CD4-positive, alpha-beta T cell (primary cell): ENCODE measurements at regions of chr16 and their contacts with region 1.

Region 1: GRCh38 chr16:4475880-4476788 is at the start of gene HMOX2:
- DNase-seq: peak; percentile 86 to 97 (median 92)
- ATAC-seq: peak; percentile 85
- H3K4me3 ChIP-seq: peak within 1 kb of the TSS; percentile 98
- H3K4me3 Mint-ChIP-seq: peak within 1 kb of the TSS; percentile 92
- H3K27ac ChIP-seq: peak within 1 kb of the TSS; percentile 67 to 80
- H3K27ac Mint-ChIP-seq: peak within 1 kb of the TSS; percentile 78
- H3K4me1 ChIP-seq: peaks cover 68% of the 10 kb centered on the region
- H3K4me1 Mint-ChIP-seq: peaks cover 47% of the 10 kb centered on the region
- H3K27me3 ChIP-seq: no peaks in the 10 kb centered on the region
- H3K27me3 Mint-ChIP-seq: no peaks in the 10 kb centered on the region
- CTCF ChIP-seq: peak; percentile 40
- total RNA-seq, gene HMOX2: 63.4 to 66.4 TPM

Region 2: GRCh38 chr16:3938848-3939624 is 537.1 kb before region 1 on chr16:
- CTCF ChIA-PET with region 1: no interaction called
- POLR2A ChIA-PET with region 1: no interaction called
- intact Hi-C with region 1: no loop called
- DNase-seq: peak; percentile 42 to 82 (median 61)
- ATAC-seq: peak; percentile 84
- H3K4me3 ChIP-seq: peak overlapping the region; percentile 33
- H3K4me3 Mint-ChIP-seq: no peak overlapping the region
- H3K27ac ChIP-seq: no peak overlapping the region
- H3K27ac Mint-ChIP-seq: no peak overlapping the region
- H3K4me1 ChIP-seq: peaks cover 11% of the 10 kb centered on the region
- H3K4me1 Mint-ChIP-seq: no peaks in the 10 kb centered on the region
- H3K27me3 ChIP-seq: peaks cover 0 to 6% of the 10 kb centered on the region in 2 experiments
- H3K27me3 Mint-ChIP-seq: peaks cover 3% of the 10 kb centered on the region
- CTCF ChIP-seq: peak; percentile 96

Region 3: DNA sequence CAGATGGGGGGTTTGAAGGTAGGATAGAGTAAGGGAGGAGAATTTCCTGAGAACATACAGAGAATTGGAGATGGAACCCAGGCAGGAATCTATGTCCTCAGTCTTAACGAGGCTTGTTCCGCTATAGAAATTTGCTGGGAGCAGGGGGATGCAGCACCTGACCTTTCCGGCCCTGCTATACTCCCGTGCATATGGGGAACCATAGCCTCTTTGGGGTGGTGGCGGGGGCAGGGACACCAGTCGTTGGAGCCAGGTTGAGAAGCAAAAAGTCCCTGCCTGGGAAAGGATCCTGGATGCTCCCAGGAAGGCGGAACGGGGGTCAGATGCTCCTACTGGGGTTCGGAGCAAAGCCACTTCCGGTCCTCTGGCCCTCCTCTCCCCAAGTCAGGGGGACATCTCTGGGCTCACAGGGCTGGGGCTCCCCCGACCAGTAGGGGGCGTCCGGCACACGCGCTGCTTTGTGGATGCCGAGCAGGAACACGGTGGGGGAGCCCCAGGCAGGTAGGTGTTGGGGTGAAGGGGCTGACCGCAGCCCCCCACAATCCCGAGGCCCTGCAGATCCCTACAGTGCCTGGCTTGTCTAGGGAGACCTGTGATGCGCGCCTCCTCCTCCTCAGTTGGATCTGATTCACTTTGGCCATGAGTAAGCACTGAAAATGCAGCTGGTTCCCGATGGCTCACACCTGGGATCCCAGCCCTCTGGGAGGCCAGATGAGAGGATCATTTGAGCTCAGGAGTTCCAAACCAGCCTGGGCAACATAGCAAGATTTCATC is 187.8 kb before region 1 on chr16:
- CTCF ChIA-PET with region 1: no interaction called
- POLR2A ChIA-PET with region 1: no interaction called
- intact Hi-C with region 1: no loop called
- DNase-seq: peak; percentile 75 to 92 (median 80)
- ATAC-seq: peak; percentile 97
- H3K4me3 ChIP-seq: no peak overlapping the region
- H3K4me3 Mint-ChIP-seq: no peak overlapping the region
- H3K27ac ChIP-seq: no peak overlapping the region
- H3K27ac Mint-ChIP-seq: no peak overlapping the region
- H3K4me1 ChIP-seq: peaks cover 8% of the 10 kb centered on the region
- H3K4me1 Mint-ChIP-seq: no peaks in the 10 kb centered on the region
- H3K27me3 ChIP-seq: peaks cover 0 to 3% of the 10 kb centered on the region in 2 experiments
- H3K27me3 Mint-ChIP-seq: peaks cover 12% of the 10 kb centered on the region
- CTCF ChIP-seq: peak; percentile 99

Region 4: DNA sequence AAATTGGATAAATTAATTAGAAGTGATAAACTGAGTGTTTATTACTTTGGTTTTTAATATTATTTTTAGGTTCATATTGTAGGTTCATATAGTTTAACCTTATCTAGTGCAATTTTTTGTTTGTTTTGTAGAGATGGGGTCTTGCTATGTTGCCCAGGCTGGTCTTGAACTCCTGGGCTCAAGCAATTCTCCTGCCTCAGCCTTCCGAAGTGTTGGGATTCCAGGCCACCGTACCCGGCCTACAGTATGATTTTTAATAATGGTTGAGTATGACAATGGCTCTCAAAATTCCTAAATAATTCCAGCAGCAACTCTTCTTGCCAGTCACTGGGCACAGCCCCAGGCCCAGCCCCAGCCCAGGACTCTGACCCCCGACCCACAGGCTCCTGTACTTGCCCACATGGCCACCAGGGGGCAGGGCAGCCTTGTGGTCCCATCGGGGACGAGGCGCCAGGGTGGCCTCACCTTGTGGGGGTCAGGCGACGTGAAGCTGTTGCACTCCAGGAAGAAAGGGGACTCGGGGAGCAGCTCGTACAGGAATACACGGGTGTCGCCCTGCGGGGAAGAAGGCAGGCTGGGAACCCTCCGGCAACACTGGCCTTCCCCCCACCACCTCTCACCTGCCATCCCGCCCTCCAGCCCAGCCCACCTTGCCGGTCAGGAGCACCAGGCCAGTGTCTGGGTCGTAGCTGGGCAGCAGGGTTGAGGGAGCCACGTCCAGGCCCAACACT is 117.1 kb before region 1 on chr16:
- CTCF ChIA-PET with region 1: no interaction called
- POLR2A ChIA-PET with region 1: no interaction called
- intact Hi-C with region 1: no loop called
- DNase-seq: peak; percentile 53 to 79 (median 60)
- ATAC-seq: peak; percentile 67
- H3K4me3 ChIP-seq: no peak overlapping the region
- H3K4me3 Mint-ChIP-seq: no peak overlapping the region
- H3K27ac ChIP-seq: no peak overlapping the region
- H3K27ac Mint-ChIP-seq: peak overlapping the region; percentile 48
- H3K4me1 ChIP-seq: no peaks in the 10 kb centered on the region
- H3K4me1 Mint-ChIP-seq: no peaks in the 10 kb centered on the region
- H3K27me3 ChIP-seq: no peaks in the 10 kb centered on the region
- H3K27me3 Mint-ChIP-seq: no peaks in the 10 kb centered on the region
- CTCF ChIP-seq: peak; percentile 90

Region 5: GRCh38 chr16:4461250-4462085 is 14.7 kb before region 1 on chr16:
- CTCF ChIA-PET with region 1: interaction called, 4 read pairs
- POLR2A ChIA-PET with region 1: interaction called, 28 read pairs
- intact Hi-C with region 1: no loop called
- DNase-seq: no peak
- ATAC-seq: no peak
- H3K4me3 ChIP-seq: no peak overlapping the region
- H3K4me3 Mint-ChIP-seq: no peak overlapping the region
- H3K27ac ChIP-seq: no peak overlapping the region
- H3K27ac Mint-ChIP-seq: peak overlapping the region; percentile 51
- H3K4me1 ChIP-seq: peaks cover 32% of the 10 kb centered on the region
- H3K4me1 Mint-ChIP-seq: peaks cover 20% of the 10 kb centered on the region
- H3K27me3 ChIP-seq: no peaks in the 10 kb centered on the region
- H3K27me3 Mint-ChIP-seq: no peaks in the 10 kb centered on the region
- CTCF ChIP-seq: no peak

Region 6: DNA sequence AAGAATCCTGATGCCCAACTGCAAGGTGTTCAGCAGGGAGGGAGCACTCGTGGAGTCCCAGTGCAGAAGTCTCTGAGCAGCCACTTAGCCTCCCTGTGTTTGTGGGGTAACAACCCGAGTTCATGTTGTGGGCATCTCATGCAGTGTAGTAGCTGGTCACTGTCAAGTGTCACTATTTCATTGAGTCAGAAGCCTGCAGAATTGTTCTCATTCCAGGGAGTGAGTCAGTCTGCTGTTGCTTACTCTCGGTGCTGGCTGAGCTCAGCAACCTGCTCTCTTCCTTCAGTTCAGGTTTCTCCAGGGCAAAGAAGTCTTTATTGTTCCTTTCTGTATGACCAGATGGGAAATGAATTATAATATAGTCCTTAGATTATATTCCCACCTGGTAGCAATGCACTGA is 24.1 kb after region 1 on chr16:
- CTCF ChIA-PET with region 1: interaction called, 70 read pairs
- POLR2A ChIA-PET with region 1: interaction called, 140 read pairs
- intact Hi-C with region 1: loop called (anchors 1 kb)
- DNase-seq: no peak
- ATAC-seq: no peak
- H3K4me3 ChIP-seq: no peak overlapping the region
- H3K4me3 Mint-ChIP-seq: no peak overlapping the region
- H3K27ac ChIP-seq: peak overlapping the region in 1 of 2 donors; percentile 37
- H3K27ac Mint-ChIP-seq: peak overlapping the region; percentile 97
- H3K4me1 ChIP-seq: peaks cover 81% of the 10 kb centered on the region
- H3K4me1 Mint-ChIP-seq: peaks cover 89% of the 10 kb centered on the region
- H3K27me3 ChIP-seq: no peaks in the 10 kb centered on the region
- H3K27me3 Mint-ChIP-seq: no peaks in the 10 kb centered on the region
- CTCF ChIP-seq: no peak

Region 7: DNA sequence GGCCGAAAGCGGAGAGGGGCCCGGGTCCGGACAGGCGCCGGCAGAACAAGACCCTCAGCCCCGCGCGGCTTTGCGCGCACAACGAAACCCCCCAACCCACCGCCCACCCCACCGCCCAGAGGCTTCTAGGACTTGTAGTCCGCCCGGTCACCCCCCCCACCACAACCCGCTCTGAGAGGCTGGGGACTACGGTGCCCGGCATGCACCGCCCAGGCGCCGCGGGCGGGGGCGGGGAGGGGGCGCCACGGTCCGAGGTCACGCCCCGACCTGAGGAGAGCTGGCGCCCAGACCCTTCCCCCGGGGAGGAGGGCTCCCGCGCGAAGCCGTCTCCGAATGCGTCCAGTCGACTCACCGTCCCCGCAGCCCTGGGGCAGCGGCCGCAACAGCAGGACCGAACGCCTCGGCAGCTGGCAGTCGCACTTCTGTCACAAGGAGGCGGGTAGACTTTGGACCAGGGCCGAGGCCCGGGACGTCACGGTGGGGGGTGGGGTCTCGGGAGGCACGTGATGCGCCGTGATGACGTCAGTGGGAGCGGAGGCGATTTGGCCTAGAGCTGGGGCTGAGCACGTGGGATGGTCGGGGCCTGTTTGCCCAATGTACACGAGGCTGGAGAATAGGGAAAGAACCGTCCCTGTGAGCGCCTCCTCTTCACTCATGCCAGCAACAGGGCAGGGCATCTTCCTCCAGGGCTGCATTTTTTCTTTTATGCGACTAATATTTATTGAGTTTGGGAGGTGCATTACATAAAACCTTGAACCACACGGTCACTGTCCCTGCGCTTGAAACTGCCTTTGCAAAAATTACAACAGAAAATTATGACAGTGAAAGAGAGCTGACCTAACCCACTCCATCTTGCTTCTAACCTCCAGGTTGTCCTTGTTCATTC is 62.5 kb after region 1 on chr16 and contains the start of gene CDIP1:
- CTCF ChIA-PET with region 1: interaction called, 6 read pairs
- POLR2A ChIA-PET with region 1: interaction called, 17 read pairs
- intact Hi-C with region 1: loop called (anchors 2 kb)
- DNase-seq: peak; percentile 89 to 98 (median 94)
- ATAC-seq: peak; percentile 77
- H3K4me3 ChIP-seq: peak within 1 kb of the TSS; percentile 68
- H3K4me3 Mint-ChIP-seq: peak within 1 kb of the TSS; percentile 91
- H3K27ac ChIP-seq: peak within 1 kb of the TSS; percentile 87 to 89
- H3K27ac Mint-ChIP-seq: peak within 1 kb of the TSS; percentile 89
- H3K4me1 ChIP-seq: peaks cover 47% of the 10 kb centered on the region
- H3K4me1 Mint-ChIP-seq: peaks cover 40% of the 10 kb centered on the region
- H3K27me3 ChIP-seq: no peaks in the 10 kb centered on the region
- H3K27me3 Mint-ChIP-seq: no peaks in the 10 kb centered on the region
- CTCF ChIP-seq: no peak
- total RNA-seq, gene CDIP1: 19.5 to 22.4 TPM